PC-9 (cell line): ENCODE measurements at regions of chr1 and their contacts with region 1.

Region 1: GRCh38 chr1:111222308-111223125 is 5.0 kb upstream of the CHI3L2 start:
- DNase-seq: peak; percentile 73 to 76
- H3K4me3 ChIP-seq: no peak overlapping the region; the same call in 1 of the 2 replicates
- H3K27ac ChIP-seq: no peak overlapping the region
- H3K4me1 ChIP-seq: peaks cover 18% of the 10 kb centered on the region
- H3K27me3 ChIP-seq: no peaks in the 10 kb centered on the region
- CTCF ChIP-seq: peak; percentile 100

Region 2: GRCh38 chr1:111030590-111030989 is 191.9 kb before region 1 on chr1:
- CTCF ChIA-PET with region 1: no interaction called
- POLR2A ChIA-PET with region 1: no interaction called
- intact Hi-C with region 1: loop called (anchors 2 kb)
- DNase-seq: peak; percentile 33 to 73
- H3K4me3 ChIP-seq: no peak overlapping the region
- H3K27ac ChIP-seq: no peak overlapping the region
- H3K4me1 ChIP-seq: no peaks in the 10 kb centered on the region
- H3K27me3 ChIP-seq: no peaks in the 10 kb centered on the region
- CTCF ChIP-seq: peak; percentile 97

Region 3: DNA sequence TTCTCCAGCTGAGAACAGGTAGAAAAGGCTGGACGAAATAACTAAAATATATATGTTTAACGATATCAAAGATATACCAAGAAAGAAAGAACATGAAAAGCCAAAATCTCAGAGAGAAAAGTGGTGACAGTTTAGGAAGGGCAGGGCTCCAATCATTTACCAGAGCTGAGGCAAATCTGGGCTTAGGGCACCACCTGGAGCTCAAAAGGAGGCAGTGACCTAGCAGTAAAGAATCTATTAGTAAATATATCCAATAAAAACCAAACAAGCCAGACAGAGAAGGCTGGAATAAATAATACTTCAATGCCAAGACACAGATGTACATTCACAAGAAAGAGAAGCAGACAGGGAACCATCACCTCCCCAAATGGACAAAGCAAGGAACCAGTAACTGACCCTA is 111.7 kb after region 1 on chr1:
- CTCF ChIA-PET with region 1: interaction called, 5 read pairs
- POLR2A ChIA-PET with region 1: no interaction called
- intact Hi-C with region 1: loop called (anchors 1 kb)
- DNase-seq: peak; percentile 23 to 61
- H3K4me3 ChIP-seq: no peak overlapping the region
- H3K27ac ChIP-seq: no peak overlapping the region
- H3K4me1 ChIP-seq: no peaks in the 10 kb centered on the region
- H3K27me3 ChIP-seq: no peaks in the 10 kb centered on the region
- CTCF ChIP-seq: peak; percentile 97

Region 4: GRCh38 chr1:111399792-111400610 is 177.5 kb after region 1 on chr1:
- CTCF ChIA-PET with region 1: interaction called, 8 read pairs
- POLR2A ChIA-PET with region 1: interaction called, 3 read pairs
- intact Hi-C with region 1: loop called (anchors 1 kb)
- DNase-seq: peak; percentile 18 to 46
- H3K4me3 ChIP-seq: no peak overlapping the region
- H3K27ac ChIP-seq: no peak overlapping the region
- H3K4me1 ChIP-seq: no peaks in the 10 kb centered on the region
- H3K27me3 ChIP-seq: peaks cover 84% of the 10 kb centered on the region
- CTCF ChIP-seq: peak; percentile 88

Region 5: DNA sequence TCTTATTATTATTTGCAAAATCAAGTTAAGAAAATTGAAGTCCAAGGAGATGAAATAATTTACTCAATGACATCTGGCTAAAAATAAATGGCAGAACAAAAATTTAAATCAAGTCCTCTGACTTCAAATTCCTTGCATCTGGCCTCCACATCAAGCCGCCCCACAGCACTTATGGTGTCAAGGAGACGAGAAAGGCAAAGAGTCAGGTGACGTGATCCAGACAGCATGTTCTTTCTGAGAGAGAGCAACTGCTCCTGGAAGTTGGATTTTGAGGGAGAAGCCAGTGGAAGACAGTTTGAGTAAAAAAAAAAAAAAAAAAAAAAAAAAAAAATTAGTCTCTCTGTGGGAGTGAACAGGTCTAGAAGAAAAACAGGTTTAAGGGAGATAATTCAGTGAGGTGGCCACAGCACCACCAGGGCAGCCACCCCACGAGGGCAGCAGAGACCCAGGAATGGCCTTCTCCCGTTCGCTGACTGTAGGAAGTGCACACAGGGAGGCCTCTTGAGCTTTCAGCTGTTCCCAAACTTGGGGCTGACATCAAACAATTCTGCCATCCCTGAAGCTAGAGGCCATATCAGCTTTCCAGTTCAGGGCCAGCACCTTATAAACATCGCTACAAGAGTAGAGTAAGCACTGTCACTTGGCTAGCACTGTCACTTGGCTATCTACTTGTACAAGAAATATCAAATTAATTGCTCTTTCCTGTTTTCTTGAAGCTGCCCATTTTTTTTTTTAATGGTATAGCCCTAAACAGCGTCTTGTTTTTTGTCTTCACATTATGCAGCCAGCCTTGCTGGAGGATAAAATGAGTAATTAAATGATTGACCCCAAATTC is 259.1 kb after region 1 on chr1:
- CTCF ChIA-PET with region 1: no interaction called
- POLR2A ChIA-PET with region 1: no interaction called
- intact Hi-C with region 1: loop called (anchors 2 kb)
- DNase-seq: peak; percentile 80 to 81
- H3K4me3 ChIP-seq: no peak overlapping the region
- H3K27ac ChIP-seq: no peak overlapping the region
- H3K4me1 ChIP-seq: peaks cover 7% of the 10 kb centered on the region; the same call in 1 of the 2 replicates
- H3K27me3 ChIP-seq: no peaks in the 10 kb centered on the region
- CTCF ChIP-seq: peak; percentile 86

Region 6: DNA sequence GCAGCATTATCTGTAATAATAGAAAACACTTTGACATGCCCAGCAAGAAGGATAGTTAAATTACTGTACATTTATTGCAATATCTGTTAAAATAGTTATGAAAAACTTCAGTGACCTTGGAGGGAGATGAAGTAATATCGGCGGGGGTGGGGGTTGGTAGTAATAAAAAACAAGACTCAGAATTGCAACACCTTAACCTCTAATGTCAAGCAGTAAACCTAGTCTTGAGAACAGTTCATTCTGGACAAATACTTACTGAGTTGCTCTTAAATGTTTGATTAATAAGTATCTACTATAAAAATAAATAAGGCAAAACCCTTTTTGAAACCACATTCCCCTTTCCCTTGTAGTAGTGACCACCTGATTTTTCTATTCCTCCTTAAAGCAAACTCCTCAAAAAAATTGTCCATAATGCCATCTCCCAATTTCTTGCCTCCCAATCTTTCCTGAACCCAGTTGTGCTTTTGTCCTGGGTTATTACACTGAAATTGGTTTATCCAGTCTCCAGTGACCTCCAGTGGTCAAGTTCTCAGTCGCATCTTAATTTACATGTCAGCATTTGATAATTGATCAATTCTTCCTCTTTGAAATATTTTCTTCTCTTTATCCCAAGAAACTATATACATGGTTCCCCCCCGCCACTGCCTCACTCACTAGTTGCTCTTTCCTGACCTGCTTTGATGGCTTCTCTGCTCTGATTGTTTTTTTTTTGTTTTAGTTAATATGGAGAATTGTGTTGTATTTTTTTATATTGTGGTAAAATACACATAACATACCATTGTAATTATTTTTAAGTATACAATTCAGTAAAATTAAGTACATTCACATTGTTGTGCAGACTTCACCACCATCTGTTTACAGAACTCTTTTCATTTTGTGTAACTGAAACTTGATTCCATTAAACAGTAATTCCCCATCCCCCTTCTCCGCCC is 433.8 kb after region 1 on chr1:
- CTCF ChIA-PET with region 1: no interaction called
- POLR2A ChIA-PET with region 1: no interaction called
- intact Hi-C with region 1: loop called (anchors 2 kb)
- DNase-seq: peak; percentile 20 to 59
- H3K4me3 ChIP-seq: no peak overlapping the region
- H3K27ac ChIP-seq: no peak overlapping the region
- H3K4me1 ChIP-seq: peaks cover 25% of the 10 kb centered on the region
- H3K27me3 ChIP-seq: no peaks in the 10 kb centered on the region
- CTCF ChIP-seq: peak; percentile 92

Region 7: DNA sequence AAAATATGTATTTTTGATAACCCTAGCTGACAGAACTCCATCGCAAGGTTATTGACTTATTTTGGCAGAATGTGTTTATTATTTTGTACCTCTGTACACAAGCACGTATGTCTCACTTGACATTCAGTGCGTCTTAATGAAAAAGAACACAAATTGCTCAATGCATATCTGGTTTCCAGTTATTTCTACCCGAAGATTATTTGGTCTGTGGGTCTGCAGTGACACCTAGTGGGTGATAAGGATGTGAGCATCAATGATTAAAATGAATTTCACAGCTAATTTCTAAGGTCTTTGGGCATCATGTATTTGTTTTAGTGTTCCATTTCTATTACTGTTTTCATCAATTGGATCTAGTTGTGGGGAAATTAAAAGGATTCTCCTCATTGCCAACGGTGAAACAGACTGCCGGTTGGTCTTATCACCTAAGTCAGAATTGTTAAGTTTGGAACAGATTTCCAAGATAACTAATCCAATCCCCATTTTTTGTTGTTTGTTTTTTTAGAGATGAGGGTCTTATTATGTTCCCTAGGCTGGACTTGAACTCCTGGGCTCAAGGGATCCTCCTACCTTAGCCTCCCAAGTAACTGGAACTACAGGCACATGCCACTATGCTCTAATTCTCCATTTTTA is 547.1 kb after region 1 on chr1:
- CTCF ChIA-PET with region 1: no interaction called
- POLR2A ChIA-PET with region 1: no interaction called
- intact Hi-C with region 1: loop called (anchors 2 kb)
- DNase-seq: peak; percentile 20 to 72
- H3K4me3 ChIP-seq: no peak overlapping the region
- H3K27ac ChIP-seq: no peak overlapping the region
- H3K4me1 ChIP-seq: no peaks in the 10 kb centered on the region
- H3K27me3 ChIP-seq: peaks cover 6% of the 10 kb centered on the region; the same call in 1 of the 2 replicates
- CTCF ChIP-seq: peak; percentile 96